Testis (tissue), 5 donors: ENCODE measurements at regions of chr19 and their contacts with region 1.

Region 1: DNA sequence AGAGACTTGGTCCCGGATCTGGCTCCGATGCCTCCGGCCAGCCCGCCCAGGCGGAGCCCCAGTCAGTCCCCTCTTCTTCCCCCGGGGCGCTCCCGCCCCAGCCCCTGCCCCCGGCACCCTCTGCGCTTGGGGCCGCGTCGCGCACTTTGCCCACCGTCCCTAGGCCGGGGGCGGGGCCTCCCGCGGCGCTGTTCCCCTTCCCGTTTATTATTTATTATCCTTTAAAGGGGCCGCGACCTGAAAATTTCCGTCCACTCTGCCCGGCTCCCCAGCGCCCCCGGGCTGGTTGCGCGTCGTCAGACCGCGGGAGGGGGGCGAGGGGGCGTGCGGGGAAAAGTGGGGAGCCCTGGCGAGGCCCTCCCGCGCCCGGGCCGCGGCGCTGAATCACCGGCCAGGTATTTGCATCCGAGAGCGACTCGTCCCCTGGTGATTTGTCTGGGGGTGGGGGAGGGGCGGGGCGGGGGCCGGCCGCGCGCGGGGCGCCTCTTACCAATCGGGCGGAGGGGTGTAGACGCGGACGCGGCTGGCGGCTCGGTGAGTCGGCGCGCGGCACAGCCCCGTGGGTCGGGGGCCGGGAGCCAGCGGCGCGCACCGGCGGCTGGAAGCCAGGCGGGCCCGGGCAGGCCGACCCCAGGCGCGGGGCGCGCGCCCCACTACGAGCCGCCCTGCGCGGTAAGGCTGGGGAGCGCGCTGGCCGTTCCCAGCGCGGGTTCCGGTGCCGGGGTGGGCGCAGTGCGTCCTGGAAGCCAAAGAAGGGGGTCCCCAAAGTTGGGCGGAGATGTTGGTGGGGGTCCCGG is at the start of gene ARID3A:
- DNase-seq: peak; percentile 84
- H3K4me3 ChIP-seq: peak within 1 kb of the TSS; percentile 78 to 82
- H3K27ac ChIP-seq: peak within 1 kb of the TSS; percentile 61 to 78
- H3K4me1 ChIP-seq: peaks cover 18% of the 10 kb centered on the region
- H3K27me3 ChIP-seq: no peaks in the 10 kb centered on the region
- CTCF ChIP-seq: no peak
- POLR2A ChIP-seq: no peak
- total RNA-seq, gene ARID3A: 15.3 to 26.5 TPM

Region 2: DNA sequence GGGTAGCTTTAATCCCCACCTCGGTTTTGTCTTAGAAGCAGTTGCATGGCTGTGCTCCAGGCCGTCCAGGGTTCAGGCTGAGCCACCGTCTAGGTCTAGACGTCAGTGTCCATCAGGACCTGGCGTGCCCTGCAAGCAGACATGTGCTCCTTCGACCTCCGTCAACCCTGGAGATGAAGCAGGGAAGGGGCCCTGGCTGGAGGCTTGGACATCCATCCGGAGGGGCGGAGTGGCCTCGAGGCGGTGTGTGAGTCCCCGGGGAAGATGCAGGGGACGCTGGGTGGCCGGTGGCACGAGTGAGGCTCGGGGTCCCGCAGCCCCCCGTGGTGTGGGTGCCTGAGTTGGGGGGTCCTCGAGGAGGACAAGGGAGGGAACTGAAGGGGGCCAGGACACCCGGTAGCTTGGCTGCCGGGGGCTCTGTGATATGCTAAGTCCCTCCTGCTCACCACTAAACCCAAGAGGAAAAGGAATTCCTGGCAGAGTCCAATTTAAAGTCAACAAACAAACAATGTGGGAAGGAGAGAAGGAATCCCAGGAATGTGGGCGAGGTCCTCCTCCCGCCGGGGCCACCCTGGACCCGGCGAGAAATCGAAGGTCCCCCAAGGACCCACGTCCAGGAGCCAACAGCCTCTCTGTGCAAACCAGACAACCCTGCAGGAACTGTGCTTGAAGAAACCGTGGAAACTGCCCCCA is 143.4 kb before region 1 on chr19:
- intact Hi-C with region 1: loop called (anchors 10 kb)
- DNase-seq: no peak
- H3K4me3 ChIP-seq: peak overlapping the region in 1 of 2 donors; percentile 0
- H3K27ac ChIP-seq: peak overlapping the region in 1 of 2 donors; percentile 65
- H3K4me1 ChIP-seq: peaks cover 14% of the 10 kb centered on the region
- H3K27me3 ChIP-seq: no peaks in the 10 kb centered on the region
- CTCF ChIP-seq: no peak
- POLR2A ChIP-seq: no peak

Region 3: GRCh38 chr19:850221-850978 is 75.3 kb before region 1 on chr19:
- intact Hi-C with region 1: loop called (anchors 5 kb)
- DNase-seq: peak; percentile 90
- H3K4me3 ChIP-seq: no peak overlapping the region
- H3K27ac ChIP-seq: peak overlapping the region; percentile 40 to 79
- H3K4me1 ChIP-seq: peaks cover 14% of the 10 kb centered on the region
- H3K27me3 ChIP-seq: no peaks in the 10 kb centered on the region
- CTCF ChIP-seq: no peak
- POLR2A ChIP-seq: no peak

Region 4: DNA sequence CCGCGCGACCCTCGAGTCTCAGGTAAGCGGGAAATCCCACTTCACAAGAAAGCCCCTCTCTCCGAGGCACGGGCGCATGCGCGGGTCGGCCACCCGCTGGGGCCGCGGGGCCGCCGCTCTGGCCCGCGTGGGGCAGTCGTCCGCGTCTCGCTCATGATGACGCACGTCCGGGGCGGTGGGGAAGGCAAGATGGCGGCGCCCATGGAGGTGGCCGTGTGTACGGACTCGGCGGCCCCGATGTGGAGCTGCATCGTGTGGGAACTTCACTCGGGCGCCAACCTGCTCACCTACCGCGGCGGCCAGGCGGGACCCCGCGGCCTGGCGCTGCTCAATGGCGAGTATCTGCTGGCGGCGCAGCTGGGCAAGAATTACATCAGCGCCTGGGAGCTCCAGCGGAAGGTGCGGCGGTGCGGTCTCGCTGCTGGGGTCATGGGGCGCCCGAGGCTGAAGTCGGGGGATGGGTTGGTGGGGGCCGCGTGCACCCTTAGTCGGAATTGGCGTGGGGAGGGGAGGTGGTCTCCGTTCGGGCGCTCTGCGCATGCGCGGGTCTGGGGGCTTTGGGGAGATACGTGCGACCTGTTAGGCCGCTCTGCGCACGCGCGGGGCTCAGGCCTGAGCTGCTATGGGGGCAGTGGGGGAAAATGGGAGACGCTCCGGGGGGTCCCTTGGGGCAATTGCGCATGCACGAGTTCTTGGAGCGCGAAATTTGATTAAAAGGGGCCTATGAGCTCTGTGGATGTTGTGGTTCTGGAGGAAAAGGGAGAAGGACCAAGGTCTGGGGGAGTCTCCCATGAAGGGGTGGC is 58.6 kb after region 1 on chr19 and contains the start of gene WDR18:
- intact Hi-C with region 1: loop called (anchors 5 kb)
- DNase-seq: peak; percentile 96
- H3K4me3 ChIP-seq: peak within 1 kb of the TSS; percentile 90 to 100
- H3K27ac ChIP-seq: peak within 1 kb of the TSS; percentile 76 to 96
- H3K4me1 ChIP-seq: peaks cover 5% of the 10 kb centered on the region
- H3K27me3 ChIP-seq: no peaks in the 10 kb centered on the region
- CTCF ChIP-seq: peak in 2 of 3 experiments; percentile 16 to 47
- POLR2A ChIP-seq: no peak
- total RNA-seq, gene WDR18: 70.9 to 108 TPM